Activated B cell treated with CpG ODN at 0.5 μM for 24 hours (primary cell): ENCODE measurements at regions of chr19 and their contacts with region 1.

Region 1: DNA sequence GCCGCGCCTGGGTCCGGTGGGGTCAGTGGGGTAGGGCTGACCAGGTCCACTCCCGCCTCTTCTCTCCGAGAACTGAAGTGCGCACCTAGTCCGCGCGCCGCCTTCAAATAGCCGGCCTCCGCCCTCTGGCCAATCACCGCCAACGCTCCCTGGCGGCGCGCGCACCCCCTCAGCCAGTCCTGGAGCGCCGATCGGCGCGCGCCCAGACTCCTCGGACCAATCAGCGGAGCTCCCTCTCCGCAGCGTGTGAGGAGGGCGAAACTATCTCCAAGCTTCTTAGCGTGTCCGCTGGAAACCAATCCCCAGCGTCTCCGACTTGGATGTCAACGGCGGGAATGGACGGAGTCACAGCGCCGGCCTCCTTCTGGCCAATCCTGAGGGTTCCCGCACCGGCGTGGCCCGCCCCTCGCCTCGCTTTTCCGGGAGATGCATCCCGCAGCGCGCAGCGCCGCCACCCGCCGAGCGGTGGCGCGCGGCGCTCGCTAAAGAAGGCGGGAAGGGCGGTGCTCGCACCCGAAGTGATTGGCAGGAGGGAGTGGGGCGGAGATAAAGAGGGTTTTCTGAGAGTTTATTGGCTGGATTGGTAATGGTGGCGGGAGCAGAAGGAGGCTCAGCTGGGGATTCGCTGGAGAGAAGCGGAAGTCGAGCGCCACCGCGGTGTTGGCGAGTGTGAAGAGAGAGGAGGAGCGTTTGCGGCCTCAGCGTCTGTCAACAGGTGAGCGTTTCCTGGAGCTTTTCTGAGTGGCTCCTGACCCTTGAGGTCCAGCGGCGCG is at the start of gene ASF1B:
- DNase-seq: peak; percentile 94
- ATAC-seq: peak; percentile 80
- H3K4me3 Mint-ChIP-seq: peak within 1 kb of the TSS; percentile 94
- H3K27ac Mint-ChIP-seq: peak within 1 kb of the TSS; percentile 94
- H3K4me1 Mint-ChIP-seq: peaks cover 16% of the 10 kb centered on the region
- H3K27me3 Mint-ChIP-seq: no peaks in the 10 kb centered on the region
- CTCF ChIP-seq: no peak
- total RNA-seq, gene ASF1B: 3.4 and 3.7 TPM in 2 replicates

Region 2: GRCh38 chr19:13597640-13598039 is 539.1 kb before region 1 on chr19:
- CTCF ChIA-PET with region 1: no interaction called
- POLR2A ChIA-PET with region 1: no interaction called
- intact Hi-C with region 1: loop called (anchors 2 kb)
- DNase-seq: no peak
- ATAC-seq: peak; percentile 95
- H3K4me3 Mint-ChIP-seq: no peak overlapping the region
- H3K27ac Mint-ChIP-seq: no peak overlapping the region
- H3K4me1 Mint-ChIP-seq: peaks cover 5% of the 10 kb centered on the region
- H3K27me3 Mint-ChIP-seq: peaks cover 11% of the 10 kb centered on the region
- CTCF ChIP-seq: no peak

Region 3: DNA sequence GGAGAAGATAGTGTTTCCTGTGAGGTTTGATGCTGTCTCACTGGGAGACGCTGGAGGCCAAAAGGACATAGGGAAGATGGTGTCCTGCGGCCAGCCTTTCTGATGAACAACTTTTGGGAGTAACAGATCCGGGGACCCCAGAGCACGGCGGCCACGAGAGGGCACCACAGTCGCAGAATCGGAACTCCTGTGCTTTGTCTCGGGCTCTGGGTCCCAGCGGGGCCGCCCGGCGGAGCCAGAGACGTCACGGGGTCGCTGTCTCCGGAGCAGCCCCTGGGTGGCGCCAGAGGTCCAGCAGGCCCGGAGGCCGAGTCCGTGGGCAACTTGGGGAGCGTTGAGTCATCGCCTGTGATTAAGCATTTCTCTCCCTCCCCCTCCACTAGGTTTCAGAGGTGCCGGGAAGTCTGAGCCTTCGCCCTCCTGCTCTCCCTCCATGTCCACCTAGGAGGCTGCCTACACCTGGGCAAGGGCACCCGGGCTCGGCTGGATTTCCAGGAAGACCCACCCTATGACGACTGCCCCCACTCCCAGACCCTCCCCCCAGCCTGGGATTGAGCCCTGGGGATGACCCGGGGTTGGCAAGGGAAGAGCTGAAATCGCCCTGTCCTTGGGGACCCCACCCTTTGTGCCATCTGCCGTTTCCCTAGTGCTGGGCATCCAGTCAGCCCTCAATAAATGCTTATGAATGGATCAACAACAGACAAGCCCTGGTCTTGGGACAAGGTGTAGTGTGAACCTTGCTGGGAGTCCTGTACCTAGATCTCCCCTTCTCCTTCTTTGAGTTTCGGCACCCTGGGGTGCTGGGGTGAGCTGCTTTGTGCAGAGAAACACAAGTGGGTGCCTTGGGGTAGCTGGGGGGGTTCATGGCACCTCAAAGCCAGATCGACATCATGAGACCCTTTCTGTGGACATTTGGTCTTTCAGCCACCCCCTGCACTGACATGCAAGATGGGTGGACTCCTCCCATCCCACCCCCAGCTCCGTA is 256.3 kb before region 1 on chr19:
- CTCF ChIA-PET with region 1: interaction called, 3 read pairs
- POLR2A ChIA-PET with region 1: interaction called, 3 read pairs
- intact Hi-C with region 1: loop called (anchors 1 kb)
- DNase-seq: peak; percentile 97
- ATAC-seq: peak; percentile 99
- H3K4me3 Mint-ChIP-seq: peak overlapping the region; percentile 19
- H3K27ac Mint-ChIP-seq: peak overlapping the region; percentile 30
- H3K4me1 Mint-ChIP-seq: peaks cover 28% of the 10 kb centered on the region
- H3K27me3 Mint-ChIP-seq: peaks cover 3% of the 10 kb centered on the region
- CTCF ChIP-seq: peak; percentile 98

Region 4: DNA sequence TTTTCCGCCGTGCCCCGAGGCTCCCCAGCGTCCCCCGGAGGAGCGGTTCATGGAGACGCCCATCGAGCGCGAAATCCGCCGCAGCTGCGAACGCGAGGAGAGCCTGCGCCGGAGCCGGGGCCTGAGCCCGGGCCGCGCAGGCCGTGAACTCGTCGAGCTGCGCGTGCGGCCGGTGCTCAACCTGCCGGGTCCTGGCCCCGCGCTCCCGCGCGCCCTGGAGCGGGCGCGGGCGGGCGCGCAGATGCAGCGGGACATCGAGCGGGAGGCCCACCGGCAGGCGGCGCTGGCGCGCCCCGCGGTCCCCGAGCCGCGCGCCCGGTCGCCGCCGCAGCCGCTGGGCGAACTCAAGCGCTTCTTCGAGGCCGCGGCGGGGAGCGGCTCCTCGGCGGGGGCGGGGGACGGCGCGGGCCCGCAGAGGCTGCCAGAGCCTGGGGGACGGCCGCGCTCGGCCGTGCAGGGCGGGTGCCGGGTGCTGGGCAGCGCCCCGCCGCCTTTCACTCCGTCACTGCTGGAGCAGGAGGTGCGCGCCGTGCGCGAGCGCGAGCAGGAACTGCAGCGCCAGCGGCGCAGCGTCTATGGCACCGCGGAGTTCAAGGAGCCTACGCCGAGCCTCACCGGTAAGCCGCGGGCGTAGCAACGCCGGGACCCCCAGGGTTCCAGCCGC is 63.3 kb before region 1 on chr19:
- CTCF ChIA-PET with region 1: interaction called, 9 read pairs
- POLR2A ChIA-PET with region 1: interaction called, 3 read pairs
- intact Hi-C with region 1: loop called (anchors 1 kb)
- DNase-seq: peak; percentile 88
- ATAC-seq: peak; percentile 66
- H3K4me3 Mint-ChIP-seq: peak overlapping the region; percentile 86
- H3K27ac Mint-ChIP-seq: no peak overlapping the region
- H3K4me1 Mint-ChIP-seq: peaks cover 19% of the 10 kb centered on the region
- H3K27me3 Mint-ChIP-seq: no peaks in the 10 kb centered on the region
- CTCF ChIP-seq: no peak

Region 5: DNA sequence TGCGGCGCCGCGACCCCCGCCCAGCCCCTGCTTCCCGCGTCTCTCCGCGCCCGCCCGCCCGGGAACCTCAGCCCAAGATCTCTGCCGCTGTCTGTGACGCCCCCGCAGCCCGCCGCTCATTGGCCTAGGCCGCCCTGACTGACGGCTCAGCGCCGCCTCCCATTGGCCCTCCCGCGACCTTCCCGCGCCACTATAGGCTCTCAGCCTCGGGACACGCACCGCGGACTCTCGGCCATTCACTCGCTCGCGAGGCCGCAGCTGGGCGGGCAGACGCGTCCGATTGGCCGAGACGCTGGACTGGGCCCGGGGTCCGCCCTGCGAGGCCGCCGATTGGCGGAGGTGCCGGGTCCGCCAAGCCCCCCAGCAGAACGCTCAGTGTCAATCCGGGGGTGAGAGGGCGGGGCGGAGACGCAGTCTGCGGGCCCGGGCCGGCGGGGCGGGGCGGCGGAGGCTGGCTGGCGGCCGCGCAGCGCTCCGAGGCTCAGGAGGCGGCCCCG is 19.0 kb before region 1 on chr19 and contains the start of gene PRKACA:
- CTCF ChIA-PET with region 1: interaction called, 7 read pairs
- POLR2A ChIA-PET with region 1: interaction called, 6 read pairs
- intact Hi-C with region 1: loop called (anchors 1 kb)
- DNase-seq: peak; percentile 95
- ATAC-seq: peak; percentile 95
- H3K4me3 Mint-ChIP-seq: peak within 1 kb of the TSS; percentile 89
- H3K27ac Mint-ChIP-seq: peak within 1 kb of the TSS; percentile 68
- H3K4me1 Mint-ChIP-seq: peaks cover 42% of the 10 kb centered on the region
- H3K27me3 Mint-ChIP-seq: no peaks in the 10 kb centered on the region
- CTCF ChIP-seq: no peak
- total RNA-seq, gene PRKACA: 41.6 and 43.7 TPM in 2 replicates

Region 6: DNA sequence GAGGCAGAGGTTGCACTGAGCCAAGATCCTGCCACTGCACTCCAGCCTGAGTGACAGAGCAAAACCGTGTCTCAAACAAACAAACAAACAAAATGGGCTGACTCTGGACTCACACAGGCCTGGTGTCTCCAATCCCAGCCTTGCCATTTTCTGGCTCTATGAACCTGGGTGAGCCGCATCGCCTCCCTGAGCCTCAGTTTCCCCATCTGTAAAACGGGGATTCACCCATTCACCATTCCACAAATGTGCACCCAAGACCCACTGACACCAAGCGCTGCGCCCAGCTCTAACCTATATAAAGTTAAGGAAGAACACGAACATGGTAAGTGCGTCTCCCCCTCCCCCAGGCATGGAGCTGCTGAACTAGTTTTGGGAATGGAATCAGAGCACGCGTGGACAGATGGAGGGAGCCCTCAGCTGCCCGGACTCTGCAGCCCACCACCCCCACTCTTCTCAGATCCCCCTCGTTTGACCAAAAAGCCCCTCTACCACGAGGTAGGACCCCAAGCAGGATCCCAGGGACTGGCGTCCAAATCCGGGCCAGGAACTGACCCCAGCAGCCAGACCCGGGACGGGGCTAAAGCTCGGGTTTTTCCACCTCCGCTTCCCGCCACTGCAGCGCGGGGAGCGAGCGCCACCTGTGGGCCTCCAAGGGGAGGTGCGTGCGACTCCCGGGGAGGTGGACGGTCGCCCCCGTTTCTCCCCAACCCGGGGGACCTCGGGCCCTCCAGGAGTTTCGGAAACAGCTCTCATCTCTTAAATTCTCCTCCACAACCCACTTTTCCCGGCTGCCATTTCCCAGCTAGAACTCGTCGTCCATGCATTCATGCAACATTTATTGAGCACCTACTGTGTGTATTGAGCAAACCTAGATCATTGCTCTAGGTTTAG is 211.5 kb after region 1 on chr19:
- CTCF ChIA-PET with region 1: interaction called, 33 read pairs
- POLR2A ChIA-PET with region 1: interaction called, 5 read pairs
- intact Hi-C with region 1: loop called (anchors 2 kb)
- DNase-seq: peak; percentile 66
- ATAC-seq: peak; percentile 80
- H3K4me3 Mint-ChIP-seq: peak overlapping the region; percentile 57
- H3K27ac Mint-ChIP-seq: peak overlapping the region; percentile 24
- H3K4me1 Mint-ChIP-seq: peaks cover 27% of the 10 kb centered on the region
- H3K27me3 Mint-ChIP-seq: no peaks in the 10 kb centered on the region
- CTCF ChIP-seq: peak; percentile 83

Region 7: GRCh38 chr19:14472202-14472938 is 335.7 kb after region 1 on chr19:
- CTCF ChIA-PET with region 1: interaction called, 3 read pairs
- POLR2A ChIA-PET with region 1: interaction called, 6 read pairs
- intact Hi-C with region 1: loop called (anchors 1 kb)
- DNase-seq: peak; percentile 87
- ATAC-seq: peak; percentile 83
- H3K4me3 Mint-ChIP-seq: peak overlapping the region; percentile 24
- H3K27ac Mint-ChIP-seq: no peak overlapping the region
- H3K4me1 Mint-ChIP-seq: peaks cover 25% of the 10 kb centered on the region
- H3K27me3 Mint-ChIP-seq: peaks cover 28% of the 10 kb centered on the region
- CTCF ChIP-seq: peak; percentile 92